B cell (primary cell): ENCODE measurements at regions of chr1 and their contacts with region 1.

Region 1: DNA sequence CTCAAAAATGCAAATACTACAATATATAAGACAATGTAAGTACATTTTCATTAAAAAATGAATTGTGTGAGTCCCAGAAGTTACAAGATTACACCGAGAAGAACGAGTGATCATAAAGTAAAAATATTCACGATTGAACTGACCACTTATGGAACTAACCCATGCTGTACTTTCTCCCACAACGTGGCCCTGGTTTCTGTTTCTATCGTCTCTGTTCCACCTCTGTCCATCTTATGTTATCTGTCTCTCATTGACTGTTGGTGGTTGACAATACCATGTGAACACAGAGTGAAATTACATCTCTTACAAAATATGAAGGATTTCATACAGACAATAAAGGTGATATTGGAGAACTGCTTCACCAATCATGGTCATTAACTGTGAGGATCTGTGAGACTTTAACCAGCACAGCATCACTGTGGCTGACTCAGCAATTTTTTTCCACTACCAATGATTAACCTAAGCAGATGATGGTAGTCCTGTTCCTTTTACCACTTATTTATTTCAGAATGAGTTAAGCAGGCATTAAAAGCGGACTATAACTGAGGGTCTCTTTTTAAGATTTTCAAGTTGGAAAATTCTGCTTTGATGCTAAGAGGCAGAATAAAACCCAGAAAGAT is 165.1 kb downstream of the TGFB2 start:
- DNase-seq: no peak
- ATAC-seq: no peak
- H3K4me3 ChIP-seq: no peak overlapping the region
- H3K4me3 Mint-ChIP-seq: no peak overlapping the region
- H3K27ac ChIP-seq: no peak overlapping the region
- H3K27ac Mint-ChIP-seq: no peak overlapping the region
- H3K4me1 ChIP-seq: peaks cover 0 to 12% of the 10 kb centered on the region in 2 donors
- H3K4me1 Mint-ChIP-seq: peaks cover 13% of the 10 kb centered on the region
- H3K27me3 ChIP-seq: no peaks in the 10 kb centered on the region
- H3K27me3 Mint-ChIP-seq: no peaks in the 10 kb centered on the region
- CTCF ChIP-seq: no peak

Region 2: DNA sequence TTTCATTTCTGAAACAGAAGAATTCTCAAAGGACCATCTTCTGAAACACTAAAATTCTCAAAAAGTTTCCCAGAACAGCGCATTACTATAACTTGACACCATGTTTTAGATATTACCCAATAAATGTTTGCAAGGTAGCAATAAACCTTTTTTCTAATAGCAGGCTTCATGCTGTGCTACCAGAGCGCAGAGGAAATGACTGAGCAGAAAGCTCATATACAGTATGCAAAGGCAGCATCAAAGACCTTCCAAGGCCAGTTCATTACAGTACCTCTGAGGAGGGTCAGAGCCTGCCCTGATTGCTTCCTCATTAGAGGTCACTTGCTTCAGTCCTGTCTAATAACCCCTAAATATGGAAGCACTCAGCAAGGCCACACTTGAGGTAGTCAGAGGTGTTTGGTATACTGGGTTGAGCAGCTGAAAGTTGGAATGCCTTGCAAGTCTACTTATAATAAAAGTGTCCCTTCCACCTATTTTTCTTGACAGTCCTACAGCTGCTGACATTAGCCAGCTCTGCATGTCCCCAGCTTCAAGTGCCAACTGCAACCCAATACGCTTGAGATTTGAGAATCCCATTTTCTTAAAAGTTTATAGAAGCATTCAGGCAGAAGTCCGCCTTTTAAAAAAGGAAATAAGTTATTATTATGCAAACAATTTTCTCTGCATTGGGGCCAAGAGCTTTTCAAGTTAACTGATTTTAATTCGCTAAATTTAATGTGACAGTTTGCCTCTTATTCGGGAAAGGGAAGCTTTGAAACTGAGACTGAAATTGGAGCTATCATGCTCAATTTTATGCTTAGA is 895.5 kb after region 1 on chr1:
- CTCF ChIA-PET with region 1: no interaction called
- POLR2A ChIA-PET with region 1: no interaction called
- intact Hi-C with region 1: loop called (anchors 10 kb)
- DNase-seq: no peak
- ATAC-seq: no peak
- H3K4me3 ChIP-seq: no peak overlapping the region
- H3K4me3 Mint-ChIP-seq: no peak overlapping the region
- H3K27ac ChIP-seq: no peak overlapping the region
- H3K27ac Mint-ChIP-seq: no peak overlapping the region
- H3K4me1 ChIP-seq: no peaks in the 10 kb centered on the region
- H3K4me1 Mint-ChIP-seq: peaks cover 5% of the 10 kb centered on the region
- H3K27me3 ChIP-seq: no peaks in the 10 kb centered on the region
- H3K27me3 Mint-ChIP-seq: no peaks in the 10 kb centered on the region
- CTCF ChIP-seq: no peak